Mammary epithelial cell (primary cell): ENCODE measurements at regions of chr5 and their contacts with region 1.

Region 1: DNA sequence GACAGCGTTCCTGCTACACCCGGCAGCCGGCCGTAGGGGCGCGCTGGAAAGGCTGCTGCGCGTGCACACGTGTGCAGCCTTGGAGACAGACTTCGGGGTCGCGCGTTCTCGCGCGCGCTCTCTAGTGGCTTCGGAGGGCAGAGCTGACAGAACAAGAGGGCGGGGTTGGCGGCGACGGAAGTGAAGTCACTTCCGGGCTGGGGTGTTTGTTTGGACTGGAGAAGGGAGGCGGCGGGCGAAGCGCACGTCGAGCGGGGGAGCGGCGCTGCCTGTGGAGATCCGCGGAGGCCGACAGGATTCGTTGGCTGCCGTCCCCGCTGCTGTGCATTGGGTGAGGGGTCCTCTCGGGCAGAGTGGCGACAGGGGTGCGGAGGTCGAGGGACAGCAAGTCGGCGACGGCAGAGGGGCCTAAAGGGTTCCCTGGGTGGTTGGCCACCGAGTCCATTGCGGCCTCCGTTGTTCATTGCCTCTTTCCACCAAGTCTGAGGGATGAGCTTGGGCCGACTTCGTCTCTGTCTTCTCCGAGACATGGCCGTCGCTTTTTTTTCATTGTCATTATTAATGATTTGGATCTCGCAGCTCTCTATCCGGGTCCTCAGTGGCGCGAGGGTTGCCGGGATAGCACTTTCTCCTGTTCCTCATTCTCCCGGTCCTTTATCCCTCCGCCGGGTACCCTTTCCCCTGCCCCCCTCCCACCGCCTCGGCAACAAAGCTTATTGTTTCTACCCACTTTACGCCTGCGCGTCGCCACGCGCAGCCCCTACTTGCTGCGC is at the start of gene PAIP2:
- DNase-seq: peak; percentile 96
- H3K4me3 ChIP-seq: peak within 1 kb of the TSS; percentile 85 to 92 (median 86)
- H3K27ac ChIP-seq: peak within 1 kb of the TSS; percentile 91
- H3K4me1 ChIP-seq: peaks cover 19% of the 10 kb centered on the region
- H3K27me3 ChIP-seq: no peaks in the 10 kb centered on the region
- CTCF ChIP-seq: peak; percentile 51 to 81
- total RNA-seq, gene PAIP2: 38.0 to 43.6 TPM

Region 2: GRCh38 chr5:139293504-139294373 is 48.1 kb before region 1 on chr5 and contains the start of gene MATR3:
- CTCF ChIA-PET with region 1: no interaction called
- dilution Hi-C with region 1: no loop called
- in situ Hi-C with region 1: no loop called
- intact Hi-C with region 1: loop called (anchors 1 kb)
- DNase-seq: peak; percentile 96
- H3K4me3 ChIP-seq: peak within 1 kb of the TSS; percentile 68 to 90 (median 85)
- H3K27ac ChIP-seq: peak within 1 kb of the TSS; percentile 91
- H3K4me1 ChIP-seq: peaks cover 8% of the 10 kb centered on the region
- H3K27me3 ChIP-seq: no peaks in the 10 kb centered on the region
- CTCF ChIP-seq: no peak
- total RNA-seq, gene MATR3: 118 to 185 TPM